WTC11 (cell line): ENCODE measurements at regions of chr9 and their contacts with region 1.

Region 1: DNA sequence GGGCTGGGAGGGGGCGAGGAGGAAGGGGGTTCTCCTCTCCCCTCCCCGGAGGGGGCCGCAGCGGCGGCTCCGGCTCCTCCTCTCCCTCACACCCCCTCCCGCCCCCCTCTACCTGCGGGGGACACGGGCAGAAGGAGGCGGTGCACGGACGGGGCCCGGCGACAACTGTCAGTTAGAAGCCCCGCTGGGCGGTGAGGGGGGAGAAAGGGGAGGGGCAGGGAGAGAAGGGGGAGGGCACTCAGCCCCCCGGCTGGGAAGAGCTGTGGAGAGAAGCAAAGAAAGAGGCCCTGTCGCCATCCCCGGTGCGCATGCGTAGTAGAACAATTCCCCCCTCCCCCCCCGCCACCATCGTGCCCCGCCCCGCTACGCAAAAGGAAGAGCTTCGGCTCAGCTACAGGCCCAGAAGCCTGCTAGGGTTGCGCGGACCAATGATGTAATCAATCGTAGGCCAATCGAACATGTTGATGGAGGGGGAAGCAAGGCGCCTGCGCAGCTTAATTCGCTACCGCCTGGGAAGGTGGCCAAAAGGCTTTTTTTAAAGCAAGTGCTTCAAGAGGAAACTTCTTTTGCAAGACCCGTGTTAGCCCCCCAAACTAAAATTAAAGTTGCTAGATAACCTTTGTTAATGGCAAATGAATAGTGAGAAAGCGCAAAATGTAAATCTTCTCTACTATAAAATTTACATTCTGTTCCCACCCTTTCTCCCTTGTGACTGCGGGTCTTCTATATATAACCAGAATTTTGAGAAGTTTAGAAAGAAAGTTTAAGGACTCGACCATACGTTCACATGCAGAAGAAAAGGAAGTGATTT is 7.0 kb downstream of the RANBP6 start:
- DNase-seq: peak; percentile 91
- ATAC-seq: peak; percentile 71
- H3K4me3 Mint-ChIP-seq: peak overlapping the region; percentile 68
- H3K27ac Mint-ChIP-seq: peak overlapping the region; percentile 94
- H3K4me1 Mint-ChIP-seq: peaks cover 29% of the 10 kb centered on the region
- H3K27me3 Mint-ChIP-seq: no peaks in the 10 kb centered on the region
- CTCF ChIP-seq: no peak

Region 2: DNA sequence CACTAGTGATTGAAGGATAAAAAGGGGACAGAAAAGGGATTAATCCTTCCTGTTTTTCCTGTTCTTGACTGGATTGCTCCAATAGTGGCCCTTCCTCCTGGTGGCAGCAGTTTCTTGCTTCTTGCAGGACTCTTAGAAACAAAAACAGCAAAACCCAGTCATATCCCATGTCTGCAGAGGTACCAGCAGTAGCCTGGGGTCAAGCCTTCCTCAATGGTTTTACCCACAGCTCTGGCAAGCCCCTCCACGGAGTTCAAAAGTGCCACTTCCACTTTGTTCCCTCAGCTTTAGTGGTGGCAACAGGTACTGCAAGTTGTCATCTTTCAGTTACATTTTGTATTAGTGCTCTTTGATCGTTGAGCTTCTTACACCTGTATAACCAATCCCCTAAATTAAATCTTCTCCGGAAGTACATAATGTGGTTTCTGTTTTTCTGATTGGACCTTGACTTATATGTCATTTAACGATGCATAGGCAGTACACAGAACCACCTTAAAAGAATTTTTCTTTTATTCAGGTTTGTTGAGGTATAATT is 15.7 kb after region 1 on chr9:
- CTCF ChIA-PET with region 1: interaction called, 32 read pairs
- POLR2A ChIA-PET with region 1: interaction called, 4 read pairs
- DNase-seq: no peak
- ATAC-seq: peak; percentile 81
- H3K4me3 Mint-ChIP-seq: no peak overlapping the region
- H3K27ac Mint-ChIP-seq: no peak overlapping the region
- H3K4me1 Mint-ChIP-seq: peaks cover 5% of the 10 kb centered on the region
- H3K27me3 Mint-ChIP-seq: peaks cover 2% of the 10 kb centered on the region; the same call in 1 of the 2 replicates
- CTCF ChIP-seq: peak; percentile 57

Region 3: DNA sequence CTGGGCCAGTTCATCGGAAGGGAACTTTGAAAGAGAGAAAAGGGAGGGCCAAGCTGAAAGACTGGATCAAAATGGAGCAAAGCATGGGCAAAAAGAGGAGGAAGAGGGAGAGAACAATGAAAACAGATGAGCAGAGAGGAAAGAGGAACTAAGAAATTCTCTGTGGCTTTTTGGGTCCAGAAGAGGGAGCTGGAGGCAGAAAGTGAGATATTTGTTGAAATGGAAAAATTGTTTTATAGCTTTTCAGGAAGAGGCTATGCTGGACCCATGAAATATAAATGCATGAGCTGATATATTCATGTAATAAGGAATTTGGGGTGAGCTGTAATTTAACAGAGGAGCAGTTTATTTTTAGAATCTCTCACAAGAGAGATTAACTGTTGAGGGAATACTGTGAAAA is 1333.9 kb after region 1 on chr9:
- CTCF ChIA-PET with region 1: no interaction called
- POLR2A ChIA-PET with region 1: no interaction called
- DNase-seq: no peak
- ATAC-seq: no peak
- H3K4me3 Mint-ChIP-seq: no peak overlapping the region
- H3K27ac Mint-ChIP-seq: no peak overlapping the region
- H3K4me1 Mint-ChIP-seq: peaks cover 6% of the 10 kb centered on the region; the same call in 1 of the 2 replicates
- H3K27me3 Mint-ChIP-seq: no peaks in the 10 kb centered on the region
- CTCF ChIP-seq: no peak